PC-9 (cell line): ENCODE measurements at regions of chr9 and their contacts with region 1.

Region 1: GRCh38 chr9:107158321-107158720 is 124.8 kb upstream of the RAD23B start:
- DNase-seq: no peak
- H3K4me3 ChIP-seq: no peak overlapping the region
- H3K27ac ChIP-seq: no peak overlapping the region
- H3K4me1 ChIP-seq: no peaks in the 10 kb centered on the region
- H3K27me3 ChIP-seq: no peaks in the 10 kb centered on the region
- CTCF ChIP-seq: peak; percentile 51

Region 2: DNA sequence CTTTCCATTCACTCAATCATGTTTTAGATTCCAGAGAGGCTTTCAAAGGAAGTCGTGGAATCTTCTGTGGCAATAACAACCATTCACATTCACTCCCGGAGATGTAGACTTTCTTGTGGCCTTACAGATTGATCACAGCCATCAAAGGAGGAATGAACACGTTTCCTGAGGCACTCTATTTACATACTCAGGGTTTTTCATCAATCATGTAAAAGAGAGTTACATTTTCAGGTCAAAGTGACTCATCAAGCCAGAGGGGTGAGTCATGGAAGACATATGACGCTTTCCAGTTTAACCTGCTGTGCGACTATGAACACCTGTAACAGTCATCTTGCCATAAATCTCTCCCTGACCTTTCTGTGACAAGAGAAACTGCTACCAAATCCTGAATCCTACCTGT is 85.4 kb after region 1 on chr9:
- CTCF ChIA-PET with region 1: no interaction called
- POLR2A ChIA-PET with region 1: interaction called, 25 read pairs
- intact Hi-C with region 1: no loop called
- DNase-seq: peak; percentile 76 to 99
- H3K4me3 ChIP-seq: peak overlapping the region; percentile 15; the same call in 1 of the 2 replicates
- H3K27ac ChIP-seq: peak overlapping the region; percentile 92
- H3K4me1 ChIP-seq: peaks cover 76% of the 10 kb centered on the region
- H3K27me3 ChIP-seq: no peaks in the 10 kb centered on the region
- CTCF ChIP-seq: no peak

Region 3: GRCh38 chr9:108356806-108357205 is 1198.5 kb after region 1 on chr9:
- CTCF ChIA-PET with region 1: no interaction called
- POLR2A ChIA-PET with region 1: no interaction called
- intact Hi-C with region 1: no loop called
- DNase-seq: no peak
- H3K4me3 ChIP-seq: no peak overlapping the region
- H3K27ac ChIP-seq: no peak overlapping the region
- H3K4me1 ChIP-seq: no peaks in the 10 kb centered on the region
- H3K27me3 ChIP-seq: no peaks in the 10 kb centered on the region
- CTCF ChIP-seq: no peak